CD14-positive monocyte (primary cell): ENCODE measurements at regions of chr16 and their contacts with region 1.

Region 1: DNA sequence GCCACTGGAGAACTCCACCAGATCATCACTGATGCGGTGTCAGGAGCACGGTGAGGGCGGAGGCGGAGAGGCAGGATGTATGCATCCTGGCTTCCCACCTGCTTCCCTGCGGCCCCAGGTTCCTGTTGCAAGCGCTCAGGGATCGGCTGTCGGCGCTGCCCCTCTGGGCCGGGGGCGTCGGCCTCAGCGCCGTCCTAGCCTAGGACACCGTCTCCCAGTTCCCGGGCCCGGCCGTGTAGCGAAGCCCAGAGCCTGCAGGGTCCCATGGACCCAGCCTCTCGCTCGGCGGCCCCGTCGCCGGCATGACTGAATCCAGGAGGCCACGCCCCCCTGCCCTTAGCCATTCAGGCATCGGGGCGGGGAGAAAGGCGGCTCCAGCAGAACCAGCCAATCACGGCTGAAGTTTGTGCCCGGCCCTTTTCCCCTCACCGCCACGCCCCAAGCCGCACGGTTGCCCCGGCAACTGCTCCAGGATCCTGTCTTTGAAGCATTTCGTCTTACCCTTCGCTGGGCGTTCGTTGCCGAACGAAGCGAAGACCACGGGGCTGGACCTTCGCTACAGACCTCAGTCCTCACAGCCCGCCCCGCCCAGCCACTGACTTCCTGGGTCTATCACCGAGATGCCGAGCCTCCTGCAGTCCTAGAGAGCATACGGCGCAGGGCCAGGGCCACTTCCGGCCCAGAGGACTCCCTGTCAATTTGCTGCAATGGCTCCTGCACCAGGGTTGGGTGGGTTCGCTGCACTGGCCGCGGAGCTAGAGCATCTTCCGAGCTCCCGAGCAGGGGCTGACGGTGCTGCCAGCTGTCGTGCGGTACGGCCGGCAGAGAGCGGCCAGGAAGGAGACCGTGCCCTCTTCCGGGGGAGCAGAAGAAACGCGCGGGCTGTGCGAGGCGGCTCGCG is 10.6 kb upstream of the ZNF213 start:
- DNase-seq: peak; percentile 88 to 95 (median 90)
- H3K4me3 ChIP-seq: peak overlapping the region; percentile 52 to 99 (median 95)
- H3K4me3 Mint-ChIP-seq: peak overlapping the region; percentile 94 to 97
- H3K27ac ChIP-seq: peak overlapping the region; percentile 68 to 69
- H3K27ac Mint-ChIP-seq: peak overlapping the region; percentile 88 to 98 (median 97)
- H3K4me1 ChIP-seq: peaks cover 20 to 29% of the 10 kb centered on the region in 2 donors
- H3K4me1 Mint-ChIP-seq: peaks cover 23% of the 10 kb centered on the region
- H3K27me3 ChIP-seq: no peaks in the 10 kb centered on the region
- H3K27me3 Mint-ChIP-seq: peaks cover 4 to 8% (median 6%) of the 10 kb centered on the region in 3 donors
- CTCF ChIP-seq: no peak

Region 2: DNA sequence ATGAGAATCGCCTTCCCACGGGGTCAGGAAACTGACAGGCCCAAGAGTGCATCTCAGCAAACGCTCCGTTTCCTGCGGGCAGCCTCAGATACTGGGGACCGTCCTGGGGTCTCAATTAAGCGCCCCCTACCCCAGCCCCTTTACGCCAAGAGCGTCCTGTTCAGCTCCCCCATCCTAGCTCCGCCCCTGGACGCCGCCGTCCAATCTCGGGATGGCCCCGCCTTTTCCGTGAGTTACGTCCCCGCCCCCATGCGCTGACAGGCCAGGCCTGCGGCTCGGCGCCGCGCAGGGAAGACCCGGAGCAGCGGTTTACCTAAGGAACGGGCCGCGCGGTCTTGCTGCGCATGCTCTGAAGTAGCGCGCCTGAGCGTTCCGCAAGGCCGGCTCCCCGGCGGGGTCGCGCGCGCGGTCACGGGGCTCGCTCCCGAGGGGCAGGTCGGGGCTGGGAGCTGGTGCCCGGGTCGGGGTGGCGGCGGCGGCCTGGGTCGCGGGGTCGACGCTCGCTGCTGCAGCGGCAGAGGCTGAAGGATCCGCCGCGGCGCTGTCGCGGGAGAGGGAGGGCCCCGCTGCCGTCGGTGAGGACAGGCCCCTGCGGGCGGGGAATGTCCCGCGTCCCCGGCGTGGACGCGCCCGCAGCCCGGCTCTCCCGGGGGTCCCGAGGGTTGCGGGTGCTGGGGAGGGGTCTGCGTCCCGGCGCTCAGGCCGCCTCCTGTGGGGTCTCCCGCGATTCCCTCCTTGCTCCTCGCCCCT is 212.5 kb before region 1 on chr16 and contains the start of gene FLYWCH1:
- intact Hi-C with region 1: loop called in 1 of 2 experiments (anchors 10 kb)
- DNase-seq: peak; percentile 96 to 97 (median 96)
- H3K4me3 ChIP-seq: peak within 1 kb of the TSS; percentile 68 to 84 (median 77)
- H3K4me3 Mint-ChIP-seq: peak within 1 kb of the TSS; percentile 92 to 93
- H3K27ac ChIP-seq: peak within 1 kb of the TSS; percentile 4 to 61
- H3K27ac Mint-ChIP-seq: peak within 1 kb of the TSS; percentile 78 to 93 (median 82)
- H3K4me1 ChIP-seq: peaks cover 27 to 40% of the 10 kb centered on the region in 2 donors
- H3K4me1 Mint-ChIP-seq: peaks cover 42% of the 10 kb centered on the region
- H3K27me3 ChIP-seq: no peaks in the 10 kb centered on the region
- H3K27me3 Mint-ChIP-seq: peaks cover 1 to 4% (median 4%) of the 10 kb centered on the region in 3 donors
- CTCF ChIP-seq: no peak
- polyA plus RNA-seq, gene FLYWCH1: 5.0 to 42.7 (median 7.1) TPM

Region 3: GRCh38 chr16:3074860-3075522 is 49.2 kb before region 1 on chr16:
- intact Hi-C with region 1: no loop called
- DNase-seq: peak; percentile 46 to 75 (median 51)
- H3K4me3 ChIP-seq: peak overlapping the region in 1 of 3 experiments; percentile 51
- H3K4me3 Mint-ChIP-seq: peak overlapping the region; percentile 71 to 75
- H3K27ac ChIP-seq: peak overlapping the region; percentile 9 to 43
- H3K27ac Mint-ChIP-seq: peak overlapping the region in 6 of 7 donors; percentile 6 to 75 (median 48)
- H3K4me1 ChIP-seq: peaks cover 38 to 51% of the 10 kb centered on the region in 2 donors
- H3K4me1 Mint-ChIP-seq: peaks cover 47% of the 10 kb centered on the region
- H3K27me3 ChIP-seq: no peaks in the 10 kb centered on the region
- H3K27me3 Mint-ChIP-seq: peaks cover 0 to 8% (median 1%) of the 10 kb centered on the region in 3 donors
- CTCF ChIP-seq: no peak

Region 4: DNA sequence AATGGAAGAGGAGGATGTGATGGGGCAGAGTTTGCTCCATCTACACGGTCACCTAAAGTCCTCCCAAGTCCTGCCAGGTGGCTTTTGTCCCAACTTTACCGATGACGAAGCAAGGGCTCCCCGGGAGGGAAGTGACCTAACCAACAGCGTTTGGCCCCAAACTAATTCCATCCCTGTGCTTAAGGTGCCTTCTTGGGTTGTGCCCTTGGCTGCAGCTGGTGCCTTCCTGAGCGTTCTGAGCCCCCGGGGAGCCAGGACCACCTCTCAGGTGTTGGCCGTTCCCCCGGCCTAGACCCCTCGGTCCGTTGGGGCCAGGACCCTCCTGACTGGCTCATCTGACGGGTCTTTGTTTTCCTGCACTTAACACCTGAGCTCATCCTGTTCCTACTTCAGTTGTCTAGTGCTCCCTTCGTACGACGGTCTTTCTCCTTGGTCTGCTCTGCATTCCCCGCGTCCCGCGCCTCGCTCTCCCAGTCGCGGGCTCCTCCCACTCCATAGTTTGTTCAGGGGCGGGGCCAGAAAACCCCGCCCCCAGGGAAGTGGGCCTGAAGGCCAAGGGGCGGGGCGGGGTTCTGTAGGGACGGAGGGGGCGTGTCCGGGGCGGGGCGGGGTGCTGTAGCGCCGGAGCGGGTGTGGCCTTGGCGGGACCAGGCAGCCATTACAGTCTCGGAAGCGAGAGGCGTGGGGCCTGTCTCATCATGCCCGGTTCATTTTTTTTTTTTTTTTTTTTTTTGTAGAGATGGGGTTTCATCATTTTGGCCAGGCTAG is 24.3 kb before region 1 on chr16:
- intact Hi-C with region 1: loop called (anchors 1 to 2 kb)
- DNase-seq: peak; percentile 93 to 96 (median 95)
- H3K4me3 ChIP-seq: peak overlapping the region in 2 of 3 experiments; percentile 19 to 73
- H3K4me3 Mint-ChIP-seq: peak overlapping the region; percentile 78 to 94
- H3K27ac ChIP-seq: no peak overlapping the region
- H3K27ac Mint-ChIP-seq: peak overlapping the region in 6 of 7 donors; percentile 47 to 92 (median 79)
- H3K4me1 ChIP-seq: peaks cover 52 to 53% of the 10 kb centered on the region in 2 donors
- H3K4me1 Mint-ChIP-seq: peaks cover 49% of the 10 kb centered on the region
- H3K27me3 ChIP-seq: no peaks in the 10 kb centered on the region
- H3K27me3 Mint-ChIP-seq: peaks cover 7 to 16% (median 10%) of the 10 kb centered on the region in 3 donors
- CTCF ChIP-seq: no peak

Region 5: GRCh38 chr16:3161136-3162018 is 37.1 kb after region 1 on chr16:
- intact Hi-C with region 1: no loop called
- DNase-seq: no peak
- H3K4me3 ChIP-seq: no peak overlapping the region
- H3K4me3 Mint-ChIP-seq: peak overlapping the region in 1 of 2 donors; percentile 79
- H3K27ac ChIP-seq: no peak overlapping the region
- H3K27ac Mint-ChIP-seq: no peak overlapping the region
- H3K4me1 ChIP-seq: peaks cover 30 to 36% of the 10 kb centered on the region in 2 donors
- H3K4me1 Mint-ChIP-seq: peaks cover 41% of the 10 kb centered on the region
- H3K27me3 ChIP-seq: peaks cover 5 to 50% of the 10 kb centered on the region in 2 donors
- H3K27me3 Mint-ChIP-seq: peaks cover 70 to 92% (median 73%) of the 10 kb centered on the region in 3 donors
- CTCF ChIP-seq: no peak